Activated CD4-positive, alpha-beta T cell treated with anti-CD3 and anti-CD28 coated beads, Interleukin-2, amount 10 ng/mL, durations not matched to agents 24 days and 14 days (primary cell): ENCODE measurements at regions of chr12 and their contacts with region 1.

Region 1: GRCh38 chr12:122190842-122191668 is 8.1 kb downstream of the LRRC43 start:
- DNase-seq: peak; percentile 92
- H3K4me3 Mint-ChIP-seq: no peak overlapping the region
- H3K27ac Mint-ChIP-seq: no peak overlapping the region
- H3K4me1 Mint-ChIP-seq: no peaks in the 10 kb centered on the region
- H3K27me3 Mint-ChIP-seq: peaks cover 15% of the 10 kb centered on the region

Region 2: DNA sequence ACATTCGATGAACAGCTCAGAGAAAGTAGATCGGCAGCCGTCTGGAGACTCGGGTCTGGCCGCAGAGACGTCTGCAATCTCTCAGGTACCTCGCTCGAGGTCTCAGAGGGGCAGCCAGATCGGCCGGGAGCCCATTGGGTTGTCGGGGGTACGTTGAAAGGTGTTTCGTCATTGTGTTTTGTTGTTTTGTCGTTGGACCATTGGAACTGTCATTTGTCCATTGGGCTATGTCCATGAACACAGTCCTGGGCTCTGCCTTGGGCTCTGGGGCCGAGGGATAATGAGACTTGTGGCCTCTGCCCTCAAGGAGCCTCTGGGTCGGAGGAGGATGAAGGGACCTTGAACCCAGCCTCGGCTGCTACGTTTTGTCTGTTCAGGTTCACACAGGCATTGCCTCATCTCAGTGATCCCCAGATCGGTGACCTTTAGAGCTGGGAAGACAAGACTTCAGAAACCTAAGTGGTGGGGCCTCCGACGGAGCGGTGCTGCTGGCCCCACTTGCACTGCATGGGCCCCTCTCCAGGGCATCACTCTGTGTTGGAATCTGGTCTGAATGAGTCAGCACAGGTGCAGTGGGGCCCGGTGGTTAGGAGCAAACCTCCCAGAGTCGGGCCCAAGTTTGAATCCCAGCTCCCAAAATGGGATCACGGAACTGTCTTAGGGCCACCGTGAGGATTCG is 136.1 kb before region 1 on chr12:
- intact Hi-C with region 1: loop called (anchors 1 kb)
- DNase-seq: no peak
- H3K4me3 Mint-ChIP-seq: no peak overlapping the region
- H3K27ac Mint-ChIP-seq: no peak overlapping the region
- H3K4me1 Mint-ChIP-seq: peaks cover 6% of the 10 kb centered on the region
- H3K27me3 Mint-ChIP-seq: no peaks in the 10 kb centered on the region

Region 3: GRCh38 chr12:122123051-122123760 is 67.8 kb before region 1 on chr12:
- intact Hi-C with region 1: loop called (anchors 2 kb)
- DNase-seq: peak; percentile 92
- H3K4me3 Mint-ChIP-seq: no peak overlapping the region
- H3K27ac Mint-ChIP-seq: no peak overlapping the region
- H3K4me1 Mint-ChIP-seq: peaks cover 20% of the 10 kb centered on the region
- H3K27me3 Mint-ChIP-seq: no peaks in the 10 kb centered on the region

Region 4: GRCh38 chr12:122159882-122160281 is 31.2 kb before region 1 on chr12:
- intact Hi-C with region 1: loop called (anchors 1 kb)
- DNase-seq: no peak
- H3K4me3 Mint-ChIP-seq: no peak overlapping the region
- H3K27ac Mint-ChIP-seq: no peak overlapping the region
- H3K4me1 Mint-ChIP-seq: peaks cover 6% of the 10 kb centered on the region
- H3K27me3 Mint-ChIP-seq: peaks cover 2% of the 10 kb centered on the region